Tibial artery (tissue), 4 donors: ENCODE measurements at regions of chr12 and their contacts with region 1.

Region 1: GRCh38 chr12:121626087-121626852 is at the start of gene ORAI1:
- DNase-seq: peak; percentile 96 to 98
- H3K4me3 ChIP-seq: peak within 1 kb of the TSS; percentile 55 to 67
- H3K27ac ChIP-seq: peak within 1 kb of the TSS; percentile 79
- H3K4me1 ChIP-seq: peaks cover 0 to 27% (median 7%) of the 10 kb centered on the region in 4 donors
- H3K27me3 ChIP-seq: no peaks in the 10 kb centered on the region
- CTCF ChIP-seq: peak in 1 of 2 experiments; percentile 43

Region 2: DNA sequence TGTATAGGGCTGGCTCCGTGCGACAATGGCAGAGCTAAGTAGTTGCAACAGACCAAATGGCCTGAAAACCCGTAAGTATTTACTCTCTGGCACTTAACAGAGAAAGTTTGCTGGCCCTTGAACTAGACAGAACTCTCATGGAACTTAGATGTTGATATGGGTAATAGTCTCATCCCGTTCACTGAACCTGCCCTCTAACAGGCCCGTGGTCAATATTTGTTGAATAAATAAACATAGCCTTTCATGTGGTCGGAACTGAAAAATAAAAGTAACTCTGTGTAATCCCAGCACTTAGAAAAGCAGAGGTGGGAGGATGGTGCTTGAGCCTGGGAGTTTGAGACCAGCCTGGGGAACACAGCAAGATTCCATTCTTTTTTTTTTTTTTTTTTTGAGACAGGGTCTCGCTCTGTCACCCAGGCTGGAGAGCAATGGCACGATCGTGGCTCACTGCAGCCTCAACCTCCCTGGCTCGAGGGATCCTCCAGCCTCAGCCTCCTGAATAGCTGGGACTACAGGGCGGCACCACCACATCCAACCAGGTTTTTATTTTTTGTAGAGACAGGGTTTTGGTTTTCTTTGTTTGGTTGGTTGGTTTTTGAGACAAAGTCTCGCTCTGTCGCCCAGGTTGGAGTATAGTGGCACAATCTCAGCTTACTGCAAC is 75.2 kb before region 1 on chr12:
- intact Hi-C with region 1: loop called (anchors 5 kb)
- DNase-seq: no peak
- H3K4me3 ChIP-seq: no peak overlapping the region
- H3K27ac ChIP-seq: no peak overlapping the region
- H3K4me1 ChIP-seq: no peaks in the 10 kb centered on the region
- H3K27me3 ChIP-seq: no peaks in the 10 kb centered on the region
- CTCF ChIP-seq: no peak

Region 3: GRCh38 chr12:121688966-121689365 is 62.7 kb after region 1 on chr12:
- intact Hi-C with region 1: loop called (anchors 5 kb)
- DNase-seq: no peak
- H3K4me3 ChIP-seq: no peak overlapping the region
- H3K27ac ChIP-seq: no peak overlapping the region
- H3K4me1 ChIP-seq: peaks cover 0 to 11% (median 5%) of the 10 kb centered on the region in 4 donors
- H3K27me3 ChIP-seq: no peaks in the 10 kb centered on the region
- CTCF ChIP-seq: no peak